Heart left ventricle (tissue), 16 donors: ENCODE measurements at regions of chr2 and their contacts with region 1.

Region 1: GRCh38 chr2:71510196-71510807 is 56.9 kb downstream of the DYSF start:
- DNase-seq: peak in 4 of 5 donors; percentile 62 to 71 (median 66)
- ATAC-seq: peak in 3 of 4 donors; percentile 48 to 62 (median 62)
- H3K4me3 ChIP-seq: no peak overlapping the region
- H3K27ac ChIP-seq: no peak overlapping the region
- H3K4me1 ChIP-seq: peaks cover under 1 to 25% (median 10%) of the 10 kb centered on the region in 12 donors
- H3K27me3 ChIP-seq: no peaks in the 10 kb centered on the region
- CTCF ChIP-seq: peak; percentile 82 to 97 (median 91)
- POLR2A ChIP-seq: no peak

Region 2: DNA sequence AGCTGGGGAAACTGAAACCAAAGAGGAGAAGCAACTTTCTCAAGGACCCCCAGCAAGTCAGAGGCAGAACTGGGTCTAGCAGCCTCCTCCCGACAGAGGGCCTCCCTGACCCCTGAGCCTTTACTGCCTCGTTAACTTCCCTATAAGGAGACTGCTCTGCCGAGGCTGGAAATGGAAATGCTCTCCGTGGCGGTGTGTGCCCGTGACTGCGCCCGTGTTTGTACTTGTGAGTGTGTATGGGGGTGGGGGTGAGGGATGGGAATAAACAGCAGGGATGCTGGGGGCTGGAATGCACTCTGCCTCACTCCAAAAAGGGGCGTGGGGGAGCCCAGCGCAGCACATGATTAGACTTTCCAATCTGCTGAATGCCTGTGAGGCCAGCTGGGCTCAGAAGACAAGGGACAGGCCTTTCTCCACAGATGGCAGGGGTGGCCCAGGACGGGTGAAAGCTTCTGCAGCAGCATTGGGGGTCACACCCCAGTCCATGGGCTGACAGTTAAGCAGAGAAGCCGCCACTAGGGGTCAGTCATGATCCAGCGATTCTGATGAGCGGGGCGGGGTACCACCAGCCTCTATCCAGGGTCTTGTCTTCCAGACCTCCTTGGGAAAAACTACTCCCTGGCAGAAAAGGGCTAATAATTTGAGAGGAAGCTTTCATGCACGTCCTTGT is 353.0 kb before region 1 on chr2:
- intact Hi-C with region 1: loop called in 4 of 10 experiments (anchors 5 to 10 kb)
- DNase-seq: peak; percentile 27 to 63 (median 49)
- ATAC-seq: peak; percentile 61 to 79 (median 75)
- H3K4me3 ChIP-seq: peak overlapping the region in 4 of 12 donors; percentile 11 to 24 (median 14)
- H3K27ac ChIP-seq: peak overlapping the region in 1 of 12 donors; percentile 58
- H3K4me1 ChIP-seq: peaks cover 0 to 10% (median 5%) of the 10 kb centered on the region in 12 donors
- H3K27me3 ChIP-seq: no peaks in the 10 kb centered on the region
- CTCF ChIP-seq: peak; percentile 46 to 72 (median 58)
- POLR2A ChIP-seq: no peak

Region 3: DNA sequence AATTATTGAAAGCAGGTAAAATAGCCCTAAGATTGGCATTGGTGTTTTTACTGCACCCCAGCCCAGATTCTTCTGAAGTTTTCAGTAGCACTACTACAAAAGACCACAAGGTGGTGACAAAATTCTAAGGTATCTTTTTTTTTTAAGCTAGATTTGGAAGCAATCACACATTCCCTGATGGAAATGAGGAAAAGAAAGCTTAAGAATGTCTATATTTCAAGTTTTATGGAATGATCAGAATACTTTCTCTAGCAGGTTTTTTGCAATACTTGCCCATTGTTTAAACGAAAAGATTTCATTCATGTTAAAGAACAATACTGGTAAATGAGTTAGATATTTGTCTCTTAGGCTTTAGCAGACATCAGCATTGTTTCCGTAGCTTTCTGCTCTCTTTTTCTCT is 210.8 kb before region 1 on chr2:
- intact Hi-C with region 1: loop called (anchors 1 to 5 kb)
- DNase-seq: no peak
- ATAC-seq: no peak
- H3K4me3 ChIP-seq: no peak overlapping the region
- H3K27ac ChIP-seq: no peak overlapping the region
- H3K4me1 ChIP-seq: peaks cover 0 to 8% (median 0%) of the 10 kb centered on the region in 12 donors
- H3K27me3 ChIP-seq: no peaks in the 10 kb centered on the region
- CTCF ChIP-seq: peak; percentile 55 to 78 (median 69)
- POLR2A ChIP-seq: no peak

Region 4: DNA sequence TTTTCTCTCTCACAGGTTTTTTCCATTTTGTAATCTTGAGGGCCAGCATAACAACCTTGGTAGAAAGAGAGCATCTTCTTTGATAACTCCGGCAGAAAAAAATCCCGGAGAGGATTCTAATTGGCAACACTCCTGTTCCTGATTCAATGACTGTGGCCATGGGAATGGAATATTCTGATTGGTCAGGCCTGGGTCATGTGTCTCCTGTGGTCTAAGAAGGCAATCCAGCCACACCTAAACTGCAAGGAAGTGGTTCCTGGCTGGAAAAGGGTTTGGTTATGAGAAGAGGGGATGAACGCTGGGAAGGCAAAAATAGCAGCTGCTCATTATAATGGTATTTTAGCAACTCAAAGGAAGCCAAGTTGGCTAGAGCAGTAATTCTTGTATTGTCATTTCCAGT is 203.5 kb before region 1 on chr2:
- intact Hi-C with region 1: loop called in 6 of 10 experiments (anchors 2 to 5 kb)
- DNase-seq: peak in 1 of 5 donors; percentile 34
- ATAC-seq: peak in 3 of 4 donors; percentile 81 to 91 (median 85)
- H3K4me3 ChIP-seq: no peak overlapping the region
- H3K27ac ChIP-seq: peak overlapping the region in 5 of 12 donors; percentile 18 to 44 (median 32)
- H3K4me1 ChIP-seq: peaks cover 0 to 18% (median 4%) of the 10 kb centered on the region in 12 donors
- H3K27me3 ChIP-seq: no peaks in the 10 kb centered on the region
- CTCF ChIP-seq: no peak
- POLR2A ChIP-seq: no peak

Region 5: GRCh38 chr2:71460595-71461303 is 49.6 kb before region 1 on chr2:
- intact Hi-C with region 1: loop called in 9 of 10 experiments (anchors 1 to 5 kb)
- DNase-seq: peak in 1 of 5 donors; percentile 47
- ATAC-seq: peak in 2 of 4 donors; percentile 19 to 31
- H3K4me3 ChIP-seq: no peak overlapping the region
- H3K27ac ChIP-seq: peak overlapping the region in 7 of 12 donors; percentile 5 to 92 (median 52)
- H3K4me1 ChIP-seq: peaks cover 0 to 84% (median 64%) of the 10 kb centered on the region in 12 donors
- H3K27me3 ChIP-seq: no peaks in the 10 kb centered on the region
- CTCF ChIP-seq: peak; percentile 48 to 81 (median 69)
- POLR2A ChIP-seq: no peak